KBM-7 (cell line): ENCODE measurements at regions of chr2 and their contacts with region 1.

Region 1: GRCh38 chr2:230160112-230160660 is 59.6 kb downstream of the SP110 start:
- DNase-seq: peak; percentile 89

Region 2: GRCh38 chr2:229896857-229897256 is 263.3 kb before region 1 on chr2:
- in situ Hi-C with region 1: no loop called
- DNase-seq: no peak

Region 3: DNA sequence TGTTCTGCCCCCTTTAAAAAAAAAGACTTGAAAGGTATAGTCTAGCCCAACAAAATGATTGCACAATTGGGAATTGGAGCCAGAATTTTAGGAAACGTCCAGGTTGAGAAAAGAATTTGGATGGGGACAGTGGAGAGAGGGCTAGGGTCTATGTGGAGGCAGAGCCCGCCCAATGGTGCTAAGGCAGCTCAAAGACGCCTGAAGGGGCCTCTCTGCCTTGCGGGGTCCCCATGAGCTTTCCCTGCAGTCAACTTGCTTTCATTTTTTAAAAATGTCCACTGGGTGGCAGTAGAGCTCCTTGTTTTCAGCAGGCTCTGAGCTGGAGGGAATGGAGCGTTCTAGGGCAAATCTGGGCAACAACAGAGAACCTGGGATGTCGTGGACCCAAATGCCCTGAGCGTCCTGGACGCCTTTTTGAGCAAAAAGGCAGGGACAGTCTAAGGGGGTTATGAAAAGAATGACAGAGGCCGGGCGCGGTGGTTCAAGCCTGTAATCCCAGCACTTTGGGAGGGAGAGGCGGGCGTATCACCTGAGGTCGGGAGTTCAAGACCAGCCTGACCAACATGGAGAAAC is 664.3 kb after region 1 on chr2:
- in situ Hi-C with region 1: loop called (anchors 25 kb)
- DNase-seq: peak; percentile 86